Left cardiac atrium (tissue), 4 donors: ENCODE measurements at regions of chr13 and their contacts with region 1.

Region 1: GRCh38 chr13:59677966-59678814 is 485.5 kb downstream of the DIAPH3 start:
- DNase-seq: no peak
- ATAC-seq: peak; percentile 73 to 86

Region 2: GRCh38 chr13:60335531-60335930 is 657.3 kb after region 1 on chr13:
- intact Hi-C with region 1: loop called in 1 of 2 experiments (anchors 10 kb)
- DNase-seq: no peak
- ATAC-seq: no peak